ENCODE measurements at regions of chr12 and their contacts with region 1.

Region 1: GRCh38 chr12:12823292-12823691 is 10.1 kb downstream of the DDX47 start:
- DNase-seq: no peak
- H3K4me3 ChIP-seq: no peak overlapping the region
- H3K27ac ChIP-seq: no peak overlapping the region
- H3K4me1 ChIP-seq: no peaks in the 10 kb centered on the region
- H3K27me3 ChIP-seq: no peaks in the 10 kb centered on the region

Region 2: GRCh38 chr12:12365931-12366431 is 457.3 kb before region 1 on chr12:
- CTCF ChIA-PET with region 1: no interaction called
- POLR2A ChIA-PET with region 1: no interaction called
- DNase-seq: no peak
- H3K4me3 ChIP-seq: no peak overlapping the region
- H3K27ac ChIP-seq: no peak overlapping the region
- H3K4me1 ChIP-seq: no peaks in the 10 kb centered on the region
- H3K27me3 ChIP-seq: no peaks in the 10 kb centered on the region

Region 3: DNA sequence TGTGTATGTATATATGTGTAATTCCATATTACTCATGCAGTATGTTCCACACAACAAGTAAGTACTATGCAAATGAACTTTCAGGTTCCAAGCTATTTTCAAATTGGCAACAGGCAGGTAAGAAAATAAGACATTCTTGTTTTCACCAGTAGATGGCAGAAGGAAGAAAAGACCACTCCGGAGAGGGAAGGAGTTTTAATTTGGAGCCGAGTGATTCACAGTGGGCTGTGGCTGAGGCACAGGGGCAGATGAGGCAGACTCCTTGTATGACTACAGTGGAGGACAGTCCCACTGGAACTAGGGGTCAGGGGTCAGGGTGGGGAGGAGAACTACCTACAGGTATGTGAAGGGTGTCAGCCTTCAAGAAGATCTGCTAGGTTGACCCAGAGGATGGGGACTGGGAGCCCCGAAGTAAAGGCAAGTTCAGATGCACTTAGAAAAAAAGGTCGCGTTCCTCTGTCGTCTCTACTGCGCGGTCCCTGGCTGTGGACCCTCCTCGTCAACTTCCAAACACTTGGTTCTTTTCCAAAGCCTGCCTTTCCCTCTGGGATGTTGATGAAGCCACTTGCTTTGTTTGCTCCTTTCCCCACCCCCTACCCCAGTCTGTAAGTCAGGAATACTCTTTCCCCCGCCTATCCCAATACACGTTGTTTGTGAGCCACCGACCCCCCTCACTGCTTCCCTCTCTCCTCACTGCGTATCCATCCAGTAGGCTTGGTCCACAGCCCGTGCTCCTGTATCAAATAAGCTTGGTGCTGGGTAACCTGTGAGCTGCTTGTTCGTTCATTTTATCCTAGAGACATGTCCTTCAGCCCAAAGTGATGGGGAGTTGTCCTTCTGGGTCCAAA is 14.0 kb after region 1 on chr12:
- CTCF ChIA-PET with region 1: interaction called, 14 read pairs
- POLR2A ChIA-PET with region 1: no interaction called
- DNase-seq: peak; percentile 56 to 78 (median 70)
- H3K4me3 ChIP-seq: no peak overlapping the region
- H3K27ac ChIP-seq: no peak overlapping the region
- H3K4me1 ChIP-seq: peaks cover 0 to 5% (median 1%) of the 10 kb centered on the region in 4 experiments
- H3K27me3 ChIP-seq: no peaks in the 10 kb centered on the region

Measured in common myeloid progenitor, CD34-positive (primary cell).